GM12878 (cell line): ENCODE measurements at regions of chr1 and their contacts with region 1.

Region 1: DNA sequence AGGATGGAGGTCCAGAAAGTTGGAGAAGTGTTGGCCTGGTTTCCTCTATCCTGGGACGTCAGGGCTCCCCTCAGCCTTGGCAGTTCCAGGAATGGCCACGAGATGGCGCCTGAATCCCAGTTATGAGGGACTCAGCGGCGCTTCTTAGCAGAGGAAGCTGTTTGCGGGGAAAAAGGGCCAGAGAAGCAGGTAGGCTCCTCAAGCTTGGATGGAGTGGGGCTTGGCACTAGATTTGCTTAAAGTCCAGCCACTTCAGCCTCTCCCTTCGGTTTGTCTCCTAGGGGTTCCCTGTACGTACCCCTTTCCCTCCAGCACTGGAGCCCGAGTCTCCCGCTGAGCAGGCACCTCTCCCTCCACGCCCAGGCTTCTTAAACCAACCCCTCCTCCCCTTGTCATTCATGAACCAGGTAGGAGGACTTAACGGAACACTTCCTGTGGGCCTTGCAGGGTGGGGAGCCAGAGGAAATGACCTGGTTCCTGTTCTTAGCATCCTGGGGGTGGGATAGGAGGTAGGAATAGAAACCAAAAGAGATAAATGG is 32.0 kb upstream of the TENT5B start:
- DNase-seq: peak; percentile 16
- ATAC-seq: peak; percentile 94
- H3K4me3 ChIP-seq: no peak overlapping the region
- H3K27ac ChIP-seq: no peak overlapping the region
- H3K4me1 ChIP-seq: peaks cover 5% of the 10 kb centered on the region; the same call in 1 of the 2 replicates
- H3K27me3 ChIP-seq: peaks cover 0 to 2% of the 10 kb centered on the region in 2 experiments; a peak in 3 of 4 replicates
- CTCF ChIP-seq: peak; percentile 96 to 99 (median 98)
- EP300 ChIP-seq: no peak
- POLR2A ChIP-seq: no peak
- RAD21 ChIP-seq: peak; percentile 95

Region 2: GRCh38 chr1:26999440-26999987 is 45.2 kb before region 1 on chr1:
- CTCF ChIA-PET with region 1: interaction called, 72 read pairs
- POLR2A ChIA-PET with region 1: no interaction called
- RAD21 ChIA-PET with region 1: interaction called, 57 read pairs
- SMC1A ChIA-PET with region 1: interaction called, 43 read pairs
- in situ Hi-C with region 1: no loop called
- intact Hi-C with region 1: loop called (anchors 5 kb)
- DNase-seq: no peak
- ATAC-seq: no peak
- H3K4me3 ChIP-seq: no peak overlapping the region
- H3K27ac ChIP-seq: no peak overlapping the region
- H3K4me1 ChIP-seq: peaks cover 3% of the 10 kb centered on the region
- H3K27me3 ChIP-seq: peaks cover under 1 to 8% of the 10 kb centered on the region in 2 experiments
- CTCF ChIP-seq: no peak
- EP300 ChIP-seq: no peak
- POLR2A ChIP-seq: no peak
- RAD21 ChIP-seq: no peak

Region 3: GRCh38 chr1:27057801-27058625 is 13.3 kb after region 1 on chr1:
- CTCF ChIA-PET with region 1: interaction called, 18 read pairs
- POLR2A ChIA-PET with region 1: no interaction called
- RAD21 ChIA-PET with region 1: interaction called, 4 read pairs
- SMC1A ChIA-PET with region 1: interaction called, 6 read pairs
- in situ Hi-C with region 1: no loop called
- intact Hi-C with region 1: no loop called
- DNase-seq: no peak
- ATAC-seq: no peak
- H3K4me3 ChIP-seq: no peak overlapping the region
- H3K27ac ChIP-seq: no peak overlapping the region
- H3K4me1 ChIP-seq: no peaks in the 10 kb centered on the region
- H3K27me3 ChIP-seq: no peaks in the 10 kb centered on the region
- CTCF ChIP-seq: no peak
- EP300 ChIP-seq: no peak
- POLR2A ChIP-seq: no peak
- RAD21 ChIP-seq: no peak

Region 4: DNA sequence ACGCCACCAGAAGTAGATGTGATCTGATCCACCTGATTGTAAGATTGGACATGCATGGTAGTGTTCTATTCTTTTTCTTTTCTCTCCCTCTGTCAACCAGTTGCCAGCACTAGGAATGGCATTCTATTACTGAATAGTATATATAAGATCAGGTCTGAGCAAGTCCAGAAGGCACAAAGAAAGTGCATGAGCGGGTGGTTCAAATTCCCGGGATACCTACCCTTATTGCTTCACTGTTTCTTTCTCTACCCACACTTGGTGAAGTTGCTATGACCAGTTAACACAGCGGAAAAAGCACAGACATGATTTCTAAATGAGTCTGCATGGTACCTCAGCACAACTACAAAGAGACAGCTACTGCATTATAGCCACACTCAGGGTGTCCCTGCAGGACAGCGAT is 46.2 kb after region 1 on chr1:
- CTCF ChIA-PET with region 1: interaction called, 577 read pairs
- POLR2A ChIA-PET with region 1: no interaction called
- RAD21 ChIA-PET with region 1: interaction called, 224 read pairs
- SMC1A ChIA-PET with region 1: interaction called, 176 read pairs
- in situ Hi-C with region 1: loop called (anchors 5 kb)
- intact Hi-C with region 1: no loop called
- DNase-seq: no peak
- ATAC-seq: no peak
- H3K4me3 ChIP-seq: no peak overlapping the region
- H3K27ac ChIP-seq: no peak overlapping the region
- H3K4me1 ChIP-seq: no peaks in the 10 kb centered on the region
- H3K27me3 ChIP-seq: 0 out of 4 replicates have a peak, but pooled peaks cover 0 to 2% of the 10 kb centered on the region in 2 experiments
- CTCF ChIP-seq: no peak
- EP300 ChIP-seq: no peak
- POLR2A ChIP-seq: no peak
- RAD21 ChIP-seq: no peak

Region 5: GRCh38 chr1:27111626-27112573 is 67.2 kb after region 1 on chr1:
- CTCF ChIA-PET with region 1: interaction called, 25 read pairs
- POLR2A ChIA-PET with region 1: no interaction called
- RAD21 ChIA-PET with region 1: interaction called, 7 read pairs
- SMC1A ChIA-PET with region 1: interaction called, 3 read pairs
- in situ Hi-C with region 1: no loop called
- intact Hi-C with region 1: no loop called
- DNase-seq: no peak
- ATAC-seq: peak; percentile 98
- H3K4me3 ChIP-seq: no peak overlapping the region
- H3K27ac ChIP-seq: peak overlapping the region; percentile 80
- H3K4me1 ChIP-seq: peaks cover 13% of the 10 kb centered on the region
- H3K27me3 ChIP-seq: no peaks in the 10 kb centered on the region
- CTCF ChIP-seq: peak; percentile 36 to 63 (median 53); a peak in 4 of 6 replicates
- EP300 ChIP-seq: no peak
- POLR2A ChIP-seq: peak; percentile 49
- RAD21 ChIP-seq: peak; percentile 75

Region 6: GRCh38 chr1:27284425-27285273 is 240.0 kb after region 1 on chr1:
- CTCF ChIA-PET with region 1: interaction called, 11 read pairs
- POLR2A ChIA-PET with region 1: no interaction called
- RAD21 ChIA-PET with region 1: interaction called, 4 read pairs
- SMC1A ChIA-PET with region 1: interaction called, 8 read pairs
- in situ Hi-C with region 1: no loop called
- intact Hi-C with region 1: loop called (anchors 2 kb)
- DNase-seq: peak; percentile 28
- ATAC-seq: peak; percentile 98
- H3K4me3 ChIP-seq: no peak overlapping the region
- H3K27ac ChIP-seq: no peak overlapping the region
- H3K4me1 ChIP-seq: no peaks in the 10 kb centered on the region
- H3K27me3 ChIP-seq: no peaks in the 10 kb centered on the region
- CTCF ChIP-seq: peak; percentile 79 to 84 (median 82)
- EP300 ChIP-seq: no peak
- POLR2A ChIP-seq: no peak
- RAD21 ChIP-seq: peak; percentile 84

Region 7: DNA sequence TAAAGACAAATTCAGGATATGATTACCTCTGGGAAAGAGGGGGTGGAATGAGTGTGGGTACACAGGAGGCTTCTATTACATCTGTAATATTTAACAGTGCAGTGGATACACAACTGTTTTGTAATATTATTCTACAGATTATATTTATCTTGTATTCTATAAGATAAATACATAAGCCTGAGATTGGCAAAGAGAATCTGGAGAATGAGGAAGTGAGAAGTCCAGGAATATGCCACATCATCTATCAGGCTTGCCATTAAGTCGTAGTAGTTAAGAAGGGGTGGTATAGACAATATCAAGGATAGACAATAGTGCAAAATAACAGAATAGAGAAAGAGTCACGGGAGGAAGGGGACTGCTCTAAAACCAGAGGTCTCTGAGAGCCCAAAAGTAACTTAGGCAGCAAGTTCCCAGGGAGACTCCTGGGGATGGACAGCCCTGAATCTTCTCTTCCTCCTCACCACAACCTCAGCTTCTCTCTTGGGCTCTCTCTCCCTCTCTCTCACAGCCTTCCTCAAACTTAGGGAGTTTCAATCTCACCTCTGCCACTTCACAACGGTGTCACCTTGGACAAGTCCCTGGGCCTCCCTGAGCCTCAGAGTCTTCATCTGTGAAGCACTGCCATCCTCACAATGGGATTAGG is 1145.8 kb after region 1 on chr1:
- CTCF ChIA-PET with region 1: no interaction called
- POLR2A ChIA-PET with region 1: no interaction called
- RAD21 ChIA-PET with region 1: no interaction called
- SMC1A ChIA-PET with region 1: no interaction called
- in situ Hi-C with region 1: no loop called
- intact Hi-C with region 1: no loop called
- DNase-seq: no peak
- ATAC-seq: no peak
- H3K4me3 ChIP-seq: no peak overlapping the region
- H3K27ac ChIP-seq: no peak overlapping the region
- H3K4me1 ChIP-seq: no peaks in the 10 kb centered on the region
- H3K27me3 ChIP-seq: no peaks in the 10 kb centered on the region
- CTCF ChIP-seq: no peak
- EP300 ChIP-seq: no peak
- POLR2A ChIP-seq: no peak
- RAD21 ChIP-seq: no peak